ENCODE measurements at regions of chr1 and their contacts with region 1.

Region 1: DNA sequence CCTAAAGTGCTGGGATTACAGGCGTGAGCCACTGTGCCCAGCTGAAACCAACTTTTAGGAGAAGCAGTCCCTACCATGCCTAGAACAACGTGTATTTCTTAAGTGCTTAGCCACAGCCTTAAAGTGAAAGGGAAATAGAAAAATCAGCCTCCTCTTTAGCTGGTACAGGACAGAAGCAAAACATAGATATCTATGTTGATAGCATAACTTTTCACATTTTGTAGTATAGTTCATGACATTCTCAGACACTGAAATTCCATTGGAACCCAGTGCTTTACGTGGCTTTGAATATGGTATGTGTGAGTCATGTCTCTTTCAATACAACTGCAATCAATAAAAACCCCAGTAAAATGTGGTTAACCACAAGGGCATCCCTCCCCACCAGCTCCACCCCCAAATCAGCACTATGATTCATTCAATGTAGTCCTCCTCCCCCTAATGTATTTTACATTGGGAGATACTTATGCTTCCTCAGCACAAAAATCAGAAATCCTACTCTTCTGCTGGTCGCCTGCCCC is 32.1 kb downstream of the TGFB2 start:
- DNase-seq: peak; percentile 100
- ATAC-seq: peak; percentile 64
- H3K4me3 ChIP-seq: peak overlapping the region; percentile 57
- H3K27ac ChIP-seq: peak overlapping the region; percentile 91
- H3K4me1 ChIP-seq: peaks cover 90% of the 10 kb centered on the region
- H3K27me3 ChIP-seq: no peaks in the 10 kb centered on the region
- CTCF ChIP-seq: no peak

Region 2: DNA sequence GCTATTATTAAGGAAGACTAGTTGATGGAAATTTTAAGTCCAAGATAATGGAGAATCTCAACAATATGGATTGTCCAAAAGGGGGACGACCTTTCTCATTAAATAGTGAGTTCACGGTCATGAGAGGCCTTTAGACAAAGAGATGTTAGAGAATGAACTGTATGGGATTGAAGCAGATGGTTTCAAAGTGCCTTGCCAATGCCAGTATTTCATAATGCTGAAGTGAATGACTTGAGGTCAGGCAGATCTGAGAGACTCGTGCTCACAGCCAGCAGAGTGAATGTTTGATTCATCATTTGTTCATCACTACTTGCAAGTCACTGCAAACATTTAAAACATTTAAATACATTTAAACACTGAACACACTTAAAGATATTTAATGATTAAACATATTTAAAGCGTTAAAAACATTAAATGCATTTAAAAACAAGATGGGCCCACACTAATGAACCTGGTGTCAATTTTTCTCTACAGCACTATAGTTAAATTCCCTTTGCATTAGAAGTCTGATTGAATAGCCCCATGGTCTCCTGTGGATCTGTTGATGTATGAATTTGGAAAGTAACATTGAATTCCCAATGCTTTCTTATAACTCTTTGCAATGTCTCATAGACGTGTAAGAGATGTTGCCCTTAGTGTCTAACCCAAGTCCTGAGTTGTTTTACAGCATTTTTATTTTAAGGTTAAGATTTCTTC is 48.6 kb after region 1 on chr1:
- CTCF ChIA-PET with region 1: interaction called, 4 read pairs
- POLR2A ChIA-PET with region 1: no interaction called
- intact Hi-C with region 1: loop called (anchors 2 kb)
- DNase-seq: peak; percentile 91
- ATAC-seq: peak; percentile 84
- H3K4me3 ChIP-seq: no peak overlapping the region
- H3K27ac ChIP-seq: peak overlapping the region; percentile 76
- H3K4me1 ChIP-seq: peaks cover 45% of the 10 kb centered on the region
- H3K27me3 ChIP-seq: no peaks in the 10 kb centered on the region
- CTCF ChIP-seq: no peak

Region 3: GRCh38 chr1:218473522-218473921 is 96.3 kb after region 1 on chr1:
- CTCF ChIA-PET with region 1: no interaction called
- POLR2A ChIA-PET with region 1: no interaction called
- intact Hi-C with region 1: loop called (anchors 1 kb)
- DNase-seq: no peak
- ATAC-seq: no peak
- H3K4me3 ChIP-seq: no peak overlapping the region
- H3K27ac ChIP-seq: no peak overlapping the region
- H3K4me1 ChIP-seq: peaks cover 28% of the 10 kb centered on the region
- H3K27me3 ChIP-seq: no peaks in the 10 kb centered on the region
- CTCF ChIP-seq: no peak

Region 4: GRCh38 chr1:218521375-218522169 is 144.4 kb after region 1 on chr1:
- CTCF ChIA-PET with region 1: no interaction called
- POLR2A ChIA-PET with region 1: no interaction called
- intact Hi-C with region 1: loop called (anchors 1 kb)
- DNase-seq: peak; percentile 88
- ATAC-seq: peak; percentile 65; the same call in 1 of the 2 replicates
- H3K4me3 ChIP-seq: no peak overlapping the region
- H3K27ac ChIP-seq: no peak overlapping the region
- H3K4me1 ChIP-seq: no peaks in the 10 kb centered on the region
- H3K27me3 ChIP-seq: no peaks in the 10 kb centered on the region
- CTCF ChIP-seq: peak; percentile 99

Region 5: DNA sequence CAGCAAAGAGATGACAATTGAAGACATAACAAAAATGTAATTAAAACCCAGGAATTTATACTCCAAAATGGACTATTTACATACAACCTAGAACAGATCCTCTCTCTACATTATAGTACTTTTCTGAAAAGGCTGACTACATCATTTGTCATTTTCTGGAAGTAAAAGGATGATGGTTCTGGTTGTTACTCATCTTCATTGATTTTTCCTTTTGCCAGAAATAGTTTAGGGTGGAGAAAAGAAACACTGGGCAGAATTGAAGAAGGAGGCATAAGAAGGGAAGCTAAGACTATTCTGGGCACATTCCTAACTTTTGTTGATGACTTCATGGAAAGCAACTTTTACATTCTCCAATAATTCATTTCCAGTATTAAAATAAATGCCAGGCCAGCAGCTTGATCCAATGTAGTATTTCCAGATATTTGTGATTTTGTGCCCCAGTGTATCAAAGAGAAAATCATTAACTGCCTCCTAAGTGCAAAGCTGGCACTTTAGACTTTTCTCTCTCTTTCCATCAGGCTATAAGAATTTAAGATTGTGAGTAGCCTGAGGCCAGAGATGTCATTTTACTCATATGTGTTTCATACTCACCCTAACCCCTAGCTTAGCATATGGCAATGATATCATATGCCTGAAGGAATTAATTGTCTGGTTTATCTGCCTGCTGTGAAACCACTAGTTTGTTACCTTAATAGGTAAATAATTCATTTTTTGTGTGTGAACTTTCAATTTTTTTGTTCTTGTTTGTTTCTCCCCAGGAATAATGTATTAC is 427.0 kb after region 1 on chr1:
- CTCF ChIA-PET with region 1: no interaction called
- POLR2A ChIA-PET with region 1: no interaction called
- intact Hi-C with region 1: loop called (anchors 5 kb)
- DNase-seq: peak; percentile 93
- ATAC-seq: peak; percentile 92
- H3K4me3 ChIP-seq: no peak overlapping the region
- H3K27ac ChIP-seq: peak overlapping the region; percentile 77
- H3K4me1 ChIP-seq: peaks cover 31% of the 10 kb centered on the region
- H3K27me3 ChIP-seq: no peaks in the 10 kb centered on the region
- CTCF ChIP-seq: no peak

Region 6: DNA sequence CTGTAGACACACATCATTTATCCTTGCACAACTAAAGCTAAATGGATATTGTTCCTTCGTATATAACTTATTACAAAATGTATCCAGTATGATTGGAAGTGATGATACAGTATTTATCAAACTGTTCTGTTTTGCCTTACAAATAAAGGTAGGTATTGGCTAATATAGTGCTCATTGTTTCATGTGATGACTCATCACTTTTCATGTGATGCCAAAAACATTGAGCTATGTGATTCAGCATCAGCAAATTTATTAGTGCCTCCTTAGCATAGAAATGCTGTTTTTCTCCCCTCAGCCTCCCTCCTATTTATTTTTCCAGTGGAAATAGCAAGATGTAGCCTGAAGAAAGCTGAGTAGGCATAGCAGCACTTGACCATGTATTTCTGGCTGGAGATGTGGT is 567.8 kb after region 1 on chr1:
- CTCF ChIA-PET with region 1: no interaction called
- POLR2A ChIA-PET with region 1: no interaction called
- intact Hi-C with region 1: loop called (anchors 5 kb)
- DNase-seq: peak; percentile 93
- ATAC-seq: peak; percentile 77
- H3K4me3 ChIP-seq: no peak overlapping the region
- H3K27ac ChIP-seq: peak overlapping the region; percentile 62
- H3K4me1 ChIP-seq: peaks cover 25% of the 10 kb centered on the region
- H3K27me3 ChIP-seq: no peaks in the 10 kb centered on the region
- CTCF ChIP-seq: no peak

Measured in PC-3 (cell line).